Activated T-helper 2 cell treated with anti-CD3 and anti-CD28 coated beads, Interferon-gamma antibody, Interleukin-2, Interleukin-4, amounts not matched to agents 10 μg/mL and 5 μg/mL and 100 μg/mL, durations not matched to agents 14 hours and 24 hours and 36 hours (primary cell): ENCODE measurements at regions of chr3 and their contacts with region 1.

Region 1: DNA sequence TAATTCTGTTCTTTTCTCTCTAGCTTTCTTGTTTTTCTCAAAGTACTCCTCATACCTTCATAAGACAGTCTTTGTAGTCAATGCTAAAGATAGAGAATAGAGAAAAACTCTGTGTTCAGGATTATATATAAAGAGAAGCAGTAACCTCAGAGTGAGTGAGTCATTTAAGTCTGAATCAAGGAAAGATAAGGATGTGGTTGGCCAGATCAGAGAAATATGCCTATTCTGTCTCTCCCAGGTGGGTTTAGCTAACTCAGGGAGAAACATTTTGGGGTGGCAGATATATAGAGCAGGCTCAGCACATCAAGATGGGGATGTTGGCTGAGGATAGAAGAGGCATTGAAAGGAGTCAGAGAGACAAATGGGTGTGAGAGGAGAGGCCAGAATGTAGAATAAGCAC is 31.4 kb downstream of the GTF2E1 start:
- DNase-seq: no peak
- H3K4me3 Mint-ChIP-seq: no peak overlapping the region
- H3K27ac Mint-ChIP-seq: no peak overlapping the region
- H3K4me1 Mint-ChIP-seq: peaks cover 8% of the 10 kb centered on the region
- H3K27me3 Mint-ChIP-seq: no peaks in the 10 kb centered on the region

Region 2: DNA sequence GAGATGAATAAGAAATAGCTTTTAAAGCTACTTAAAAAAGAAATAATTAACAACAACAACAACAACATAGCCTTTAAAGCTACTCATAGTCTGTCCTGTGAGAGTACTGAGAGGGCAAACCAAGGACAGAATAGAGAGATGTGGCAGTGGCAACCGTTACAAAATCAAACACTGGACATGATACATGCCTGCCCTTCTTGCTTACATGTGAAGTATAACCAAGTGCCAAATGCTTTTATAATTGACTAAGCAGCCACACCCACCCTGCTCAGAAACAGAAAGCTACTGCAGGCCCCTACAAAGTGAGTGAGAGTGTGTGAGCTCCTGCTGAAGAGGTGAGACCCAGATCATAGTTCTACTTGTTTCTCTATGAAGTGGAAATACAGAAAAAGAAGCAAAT is 139.4 kb before region 1 on chr3:
- intact Hi-C with region 1: no loop called
- DNase-seq: no peak
- H3K4me3 Mint-ChIP-seq: no peak overlapping the region
- H3K27ac Mint-ChIP-seq: no peak overlapping the region
- H3K4me1 Mint-ChIP-seq: no peaks in the 10 kb centered on the region
- H3K27me3 Mint-ChIP-seq: no peaks in the 10 kb centered on the region

Region 3: DNA sequence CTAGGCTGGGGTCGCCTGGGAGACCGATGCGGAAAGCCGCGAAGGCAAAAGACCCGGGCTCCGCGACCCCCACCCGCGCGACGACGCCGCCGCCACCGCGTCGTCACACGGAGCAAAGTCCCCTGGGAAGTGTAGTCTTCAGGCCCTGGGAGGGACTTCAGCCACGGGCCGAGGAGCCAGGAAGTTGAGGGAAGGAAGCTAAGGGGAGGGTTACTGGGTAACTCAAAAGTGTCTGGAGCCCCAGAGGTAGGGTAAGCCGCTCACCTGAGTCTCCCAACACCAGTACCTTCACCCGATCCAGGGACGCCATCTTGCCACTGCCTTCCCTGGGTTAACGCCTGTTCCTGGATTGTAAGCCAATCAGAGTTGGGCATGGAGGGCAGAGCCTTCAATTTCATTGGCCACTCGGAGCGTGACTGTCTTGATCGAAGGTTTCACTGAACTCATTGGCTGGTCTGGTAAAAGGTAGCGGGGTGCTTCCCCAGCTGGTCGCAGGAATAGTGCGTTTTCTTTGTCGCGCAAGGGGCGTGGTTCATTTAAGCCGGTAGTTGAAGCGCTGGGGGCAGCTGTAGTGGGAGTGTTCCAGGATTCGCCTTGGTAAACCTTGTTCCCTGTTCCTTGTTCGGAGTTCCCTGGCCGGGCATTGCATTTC is 31.6 kb before region 1 on chr3 and contains the starts of genes GTF2E1 and RABL3:
- intact Hi-C with region 1: loop called (anchors 1 kb)
- DNase-seq: peak; percentile 95
- H3K4me3 Mint-ChIP-seq: peak within 1 kb of the TSS; percentile 95
- H3K27ac Mint-ChIP-seq: peak within 1 kb of the TSS; percentile 97
- H3K4me1 Mint-ChIP-seq: peaks cover 15% of the 10 kb centered on the region
- H3K27me3 Mint-ChIP-seq: no peaks in the 10 kb centered on the region
- total RNA-seq, gene GTF2E1: 23.3 and 24.7 TPM in 2 replicates
- total RNA-seq, gene RABL3: 26.6 and 30.8 TPM in 2 replicates

Region 4: DNA sequence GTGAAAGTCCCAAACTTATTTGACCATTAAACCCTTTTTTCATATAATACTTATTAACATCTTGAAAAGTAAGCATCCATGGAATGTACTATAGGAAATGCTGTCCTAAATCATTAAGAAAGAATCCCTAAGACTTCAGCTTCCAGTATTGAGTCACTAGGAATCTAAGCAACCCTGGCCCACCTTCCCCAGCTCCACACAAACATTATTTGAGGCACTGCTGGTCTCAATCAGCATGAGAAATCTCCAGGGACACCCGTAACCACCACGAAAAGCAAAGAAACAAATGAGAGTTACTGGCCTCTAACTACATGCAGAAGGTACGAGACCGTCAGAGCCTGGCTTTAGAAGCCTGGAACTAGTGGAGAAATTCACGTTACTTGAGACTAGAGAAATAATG is 703.7 kb after region 1 on chr3:
- intact Hi-C with region 1: no loop called
- DNase-seq: no peak
- H3K4me3 Mint-ChIP-seq: no peak overlapping the region
- H3K27ac Mint-ChIP-seq: peak overlapping the region; percentile 8
- H3K4me1 Mint-ChIP-seq: peaks cover 8% of the 10 kb centered on the region
- H3K27me3 Mint-ChIP-seq: no peaks in the 10 kb centered on the region